HAP-1 (cell line): ENCODE measurements at regions of chr10 and their contacts with region 1.

Region 1: GRCh38 chr10:16777473-16778370 is 39.5 kb downstream of the RSU1 start:
- DNase-seq: peak; percentile 38 to 71
- H3K4me3 ChIP-seq: no peak overlapping the region
- H3K4me1 ChIP-seq: peaks cover 27% of the 10 kb centered on the region
- H3K27me3 ChIP-seq: no peaks in the 10 kb centered on the region

Region 2: DNA sequence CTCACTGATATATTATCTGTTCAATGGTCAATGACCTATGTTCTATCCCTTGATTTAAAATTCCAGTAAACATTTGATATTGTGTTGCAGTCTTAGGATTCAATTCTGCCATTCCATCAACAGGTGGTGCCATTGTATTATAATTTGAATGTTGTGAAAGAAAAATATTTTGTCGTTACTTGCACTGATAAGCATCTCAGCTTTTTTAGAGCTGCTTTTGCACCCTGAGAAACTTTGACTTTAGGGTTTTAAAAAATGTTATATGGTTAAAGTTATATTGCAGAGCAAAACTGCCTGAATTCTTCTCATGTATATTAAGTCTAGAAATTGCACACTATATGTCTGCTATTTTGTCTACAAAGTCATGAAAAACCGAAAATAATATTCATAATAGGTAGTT is 898.7 kb before region 1 on chr10:
- in situ Hi-C with region 1: loop called (anchors 25 kb)
- DNase-seq: peak; percentile 13 to 47
- H3K4me3 ChIP-seq: no peak overlapping the region
- H3K4me1 ChIP-seq: no peaks in the 10 kb centered on the region
- H3K27me3 ChIP-seq: peaks cover 14% of the 10 kb centered on the region

Region 3: DNA sequence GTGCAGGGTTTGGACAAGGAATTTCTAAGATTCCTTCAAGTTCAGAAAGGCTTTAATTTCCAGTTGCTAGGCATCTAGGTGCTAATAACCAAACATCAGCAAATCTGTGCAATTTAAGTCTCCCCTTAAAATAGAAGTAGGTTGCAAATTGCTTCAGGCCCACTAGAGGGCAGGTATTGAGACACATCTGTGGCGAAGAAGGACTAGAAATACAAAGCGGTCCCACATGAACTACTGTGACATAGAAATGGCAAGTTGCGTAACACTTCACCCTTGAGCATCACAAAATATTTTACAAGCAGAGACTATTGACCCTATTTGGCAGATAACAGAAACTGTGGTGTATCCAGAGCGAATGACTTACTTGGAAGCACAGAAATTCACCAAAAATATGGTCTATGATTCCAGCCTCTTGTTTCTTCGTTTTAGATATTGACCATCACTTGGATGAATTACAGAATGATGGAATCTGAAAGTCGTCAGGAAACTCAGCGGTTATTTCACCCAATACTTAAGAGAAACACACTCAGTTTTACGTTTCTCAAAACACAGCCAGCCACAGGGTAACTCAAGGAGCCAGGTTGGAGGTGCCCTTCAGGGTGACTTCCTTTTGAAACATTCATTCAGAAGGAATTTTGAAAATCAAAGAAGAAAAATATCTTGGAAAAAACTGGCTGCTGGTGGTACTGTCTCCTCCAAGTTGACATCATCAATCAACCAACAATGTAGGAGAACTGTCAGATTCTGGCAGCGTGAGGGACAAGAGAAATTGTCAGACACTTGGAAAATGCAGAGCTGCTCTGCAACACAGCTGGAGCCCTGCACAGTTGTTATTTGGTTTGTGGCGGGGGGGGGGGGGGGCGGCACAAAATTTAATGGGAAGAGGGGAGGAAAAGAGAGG is 661.1 kb before region 1 on chr10:
- in situ Hi-C with region 1: loop called (anchors 25 kb)
- DNase-seq: peak; percentile 33 to 36
- H3K4me3 ChIP-seq: no peak overlapping the region
- H3K4me1 ChIP-seq: no peaks in the 10 kb centered on the region
- H3K27me3 ChIP-seq: no peaks in the 10 kb centered on the region

Region 4: DNA sequence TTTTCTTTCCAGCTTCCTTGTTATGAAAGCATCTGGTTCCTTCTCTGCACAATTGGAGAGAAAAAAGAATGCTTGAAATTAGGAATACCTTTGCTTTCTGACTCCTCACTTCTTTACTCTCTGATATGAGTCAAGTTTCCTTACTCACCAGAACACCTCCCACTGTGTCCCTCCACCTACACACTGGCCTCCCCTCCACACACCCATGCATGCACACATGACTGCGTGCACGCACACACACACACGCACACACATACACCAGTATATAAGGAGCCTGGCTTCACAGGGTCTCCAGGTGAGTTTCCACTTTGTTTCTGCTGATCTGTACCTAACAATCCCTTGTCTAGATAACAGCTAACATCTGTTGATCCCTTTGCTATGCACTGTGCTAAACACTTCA is 352.3 kb before region 1 on chr10:
- in situ Hi-C with region 1: no loop called
- DNase-seq: no peak
- H3K4me3 ChIP-seq: no peak overlapping the region
- H3K4me1 ChIP-seq: no peaks in the 10 kb centered on the region
- H3K27me3 ChIP-seq: no peaks in the 10 kb centered on the region

Region 5: DNA sequence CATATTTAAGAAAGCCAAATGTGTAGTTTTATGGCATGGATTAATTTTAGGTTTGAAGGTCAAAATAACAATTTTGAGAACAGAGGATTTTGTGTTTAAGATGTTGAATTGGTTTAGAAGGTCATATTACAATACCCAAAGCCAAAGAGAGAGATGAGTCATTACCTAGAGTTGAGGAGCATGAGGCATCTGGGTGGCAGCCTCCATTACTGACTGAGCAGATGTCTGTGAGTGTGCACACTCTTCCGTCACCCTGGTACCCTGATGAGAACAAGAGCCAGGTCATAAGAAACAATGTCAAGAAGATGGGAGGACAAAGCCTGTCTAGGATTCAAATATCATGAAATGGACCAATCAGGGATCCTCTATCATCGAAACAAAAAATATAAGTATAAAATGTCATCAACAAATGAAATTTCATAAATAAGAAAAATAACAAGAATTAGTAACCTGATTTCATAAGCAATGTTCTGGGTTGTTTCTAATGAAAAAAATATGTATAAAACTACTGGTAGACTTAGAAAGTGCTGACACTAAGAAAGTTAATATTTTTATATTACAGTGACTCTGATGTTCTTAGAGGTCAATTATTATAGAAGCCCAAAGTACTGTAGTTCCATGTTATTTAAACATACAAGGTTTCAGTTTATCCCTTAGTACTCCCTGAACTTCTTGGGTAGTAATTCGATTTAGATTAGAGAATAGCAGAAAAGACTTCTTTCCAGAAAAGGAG is 331.9 kb after region 1 on chr10:
- in situ Hi-C with region 1: no loop called
- DNase-seq: no peak
- H3K4me3 ChIP-seq: no peak overlapping the region
- H3K4me1 ChIP-seq: no peaks in the 10 kb centered on the region
- H3K27me3 ChIP-seq: no peaks in the 10 kb centered on the region